ENCODE measurements at regions of chr11 and their contacts with region 1.

Region 1: DNA sequence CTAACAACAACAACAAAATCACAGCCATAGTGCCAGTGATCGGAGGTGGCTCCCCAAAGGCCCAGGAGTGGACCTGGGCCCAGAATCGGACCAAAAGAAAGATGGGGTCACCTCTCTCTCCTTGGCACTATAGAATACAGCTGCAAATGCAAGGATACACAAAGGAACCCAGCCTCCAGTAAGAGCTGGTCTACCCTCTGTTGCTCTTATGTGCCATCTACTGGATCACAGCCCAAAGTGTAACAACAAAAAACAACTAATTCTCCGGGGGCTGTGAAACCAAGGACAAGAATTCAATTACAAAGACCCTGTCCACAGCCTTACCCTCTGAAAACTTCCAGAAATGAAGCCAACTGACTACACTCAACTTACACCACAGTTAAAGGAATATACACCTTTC is 21.6 kb downstream of the OR8G5 start:
- DNase-seq: peak; percentile 37 to 66 (median 66)
- H3K4me3 ChIP-seq: no peak overlapping the region
- H3K27ac ChIP-seq: no peak overlapping the region
- H3K4me1 ChIP-seq: peaks cover 5 to 39% (median 27%) of the 10 kb centered on the region in 4 experiments
- H3K27me3 ChIP-seq: no peaks in the 10 kb centered on the region

Region 2: GRCh38 chr11:124070915-124071635 is 206.7 kb before region 1 on chr11:
- CTCF ChIA-PET with region 1: interaction called, 40 read pairs
- POLR2A ChIA-PET with region 1: no interaction called
- DNase-seq: peak; percentile 87 to 91 (median 88)
- H3K4me3 ChIP-seq: peak overlapping the region in 2 of 7 experiments; percentile 39 to 53
- H3K27ac ChIP-seq: peak overlapping the region; percentile 42 to 76
- H3K4me1 ChIP-seq: peaks cover 7 to 31% (median 28%) of the 10 kb centered on the region in 4 experiments
- H3K27me3 ChIP-seq: peaks cover 0 to 1% (median 0%) of the 10 kb centered on the region in 5 experiments

Region 3: GRCh38 chr11:124108156-124108555 is 169.6 kb before region 1 on chr11:
- CTCF ChIA-PET with region 1: interaction called, 15 read pairs
- POLR2A ChIA-PET with region 1: no interaction called
- DNase-seq: peak; percentile 66 to 77 (median 77)
- H3K4me3 ChIP-seq: no peak overlapping the region
- H3K27ac ChIP-seq: no peak overlapping the region
- H3K4me1 ChIP-seq: peaks cover 0 to 7% (median 1%) of the 10 kb centered on the region in 4 experiments
- H3K27me3 ChIP-seq: no peaks in the 10 kb centered on the region

Region 4: DNA sequence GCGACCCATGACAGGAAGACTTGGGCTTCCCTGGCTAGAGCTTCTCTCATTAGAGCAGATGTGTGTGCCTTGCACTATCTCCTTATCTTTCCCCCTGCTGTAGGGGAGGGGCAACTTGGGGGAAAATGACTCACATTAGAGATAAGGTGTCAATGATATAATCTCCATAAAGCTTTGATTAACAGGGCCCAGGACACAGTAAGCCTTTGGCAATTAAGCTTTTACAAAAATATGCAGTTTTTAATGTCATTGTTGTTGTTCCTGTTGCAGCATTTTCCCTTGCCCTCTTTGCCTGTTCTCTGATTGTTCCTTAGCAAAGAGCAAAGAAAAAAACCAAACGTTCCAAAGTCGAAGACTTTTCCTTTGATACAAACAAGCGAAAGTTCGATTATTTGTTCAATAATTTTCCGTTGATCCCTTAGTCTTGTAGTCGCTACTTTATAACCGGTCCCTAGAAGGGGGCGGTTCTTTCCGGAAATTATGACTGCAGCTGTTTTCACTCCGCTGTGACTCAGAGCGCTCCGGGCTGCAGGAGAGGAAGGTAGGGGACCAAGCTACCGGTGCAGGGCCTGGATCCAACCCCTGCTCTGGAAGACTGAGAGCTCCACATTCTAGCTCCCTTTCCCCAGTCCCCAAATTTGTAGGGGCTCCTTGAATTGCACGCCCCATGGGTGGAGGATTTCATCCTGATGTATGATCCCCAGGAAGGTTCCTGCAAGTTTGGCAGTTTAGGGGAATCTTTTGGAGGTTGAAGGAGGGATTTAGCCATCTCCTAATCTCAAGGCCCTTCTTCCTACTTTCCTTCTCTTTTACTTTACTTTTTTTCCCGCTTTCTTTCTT is 162.6 kb before region 1 on chr11 and contains the start of gene VWA5A:
- CTCF ChIA-PET with region 1: interaction called, 12 read pairs
- POLR2A ChIA-PET with region 1: no interaction called
- DNase-seq: peak; percentile 85 to 92 (median 85)
- H3K4me3 ChIP-seq: peak within 1 kb of the TSS; percentile 48 to 88 (median 74)
- H3K27ac ChIP-seq: peak within 1 kb of the TSS; percentile 42 to 57
- H3K4me1 ChIP-seq: peaks cover 5 to 35% (median 19%) of the 10 kb centered on the region in 4 experiments
- H3K27me3 ChIP-seq: no peaks in the 10 kb centered on the region

Measured in common myeloid progenitor, CD34-positive (primary cell).